ENCODE measurements at regions of chr22 and their contacts with region 1.

Region 1: DNA sequence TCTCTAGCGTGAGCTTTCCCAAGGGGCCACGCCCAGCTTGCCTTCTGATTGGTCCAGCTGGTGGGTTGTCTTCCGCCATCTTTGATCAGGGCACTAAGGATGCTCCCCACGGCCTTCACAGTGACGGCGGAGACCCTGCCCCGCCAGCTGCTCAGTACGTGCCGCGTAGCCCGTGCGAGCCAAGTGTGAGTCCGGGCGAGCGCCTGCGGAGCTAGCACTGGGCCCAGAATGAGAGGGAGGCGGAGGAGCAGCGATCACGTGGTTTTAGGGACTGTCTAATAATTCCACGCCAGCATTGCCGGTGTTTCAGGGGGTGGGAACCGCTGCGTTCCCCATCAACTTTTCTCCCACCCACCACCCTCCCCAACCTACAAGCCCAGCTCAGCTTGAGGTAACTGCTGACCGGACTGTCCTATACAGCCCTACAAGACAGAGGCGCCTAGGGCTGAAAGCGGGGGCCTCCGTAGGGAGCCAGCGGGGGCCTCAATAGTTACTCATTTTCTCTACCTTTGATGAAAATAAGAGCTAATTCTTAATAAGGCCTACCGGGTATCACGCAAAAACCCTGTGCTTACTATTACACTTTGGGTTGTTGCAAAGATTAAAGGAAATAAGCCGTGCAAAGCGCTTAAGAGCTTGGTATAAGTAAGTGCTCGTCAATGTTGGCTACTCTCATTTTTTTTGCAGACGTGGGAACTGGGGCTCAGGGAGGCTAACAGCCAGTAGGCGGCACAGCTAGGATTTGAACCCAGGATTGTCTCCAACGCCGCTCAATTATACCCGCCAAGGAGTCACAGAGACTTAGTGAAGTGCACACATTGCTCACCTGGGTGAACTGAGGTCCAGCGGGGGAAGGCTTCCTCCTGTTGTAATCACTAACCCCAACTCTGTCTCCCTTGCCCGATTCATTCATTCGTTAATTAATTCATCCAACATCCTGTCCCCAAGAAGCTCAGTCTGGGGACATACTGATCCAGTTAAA is 1.3 kb upstream of the MTFP1 start:
- DNase-seq: peak; percentile 97 to 99 (median 99)
- H3K4me3 ChIP-seq: peak overlapping the region; percentile 71 to 79
- H3K4me3 Mint-ChIP-seq: peak overlapping the region; percentile 96 to 99 (median 98)
- H3K27ac ChIP-seq: peak overlapping the region; percentile 89
- H3K27ac Mint-ChIP-seq: peak overlapping the region; percentile 88 to 99 (median 99)
- H3K4me1 ChIP-seq: peaks cover 47% of the 10 kb centered on the region
- H3K4me1 Mint-ChIP-seq: peaks cover 35 to 72% (median 49%) of the 10 kb centered on the region in 4 donors
- H3K27me3 ChIP-seq: no peaks in the 10 kb centered on the region
- H3K27me3 Mint-ChIP-seq: no peaks in the 10 kb centered on the region

Region 2: DNA sequence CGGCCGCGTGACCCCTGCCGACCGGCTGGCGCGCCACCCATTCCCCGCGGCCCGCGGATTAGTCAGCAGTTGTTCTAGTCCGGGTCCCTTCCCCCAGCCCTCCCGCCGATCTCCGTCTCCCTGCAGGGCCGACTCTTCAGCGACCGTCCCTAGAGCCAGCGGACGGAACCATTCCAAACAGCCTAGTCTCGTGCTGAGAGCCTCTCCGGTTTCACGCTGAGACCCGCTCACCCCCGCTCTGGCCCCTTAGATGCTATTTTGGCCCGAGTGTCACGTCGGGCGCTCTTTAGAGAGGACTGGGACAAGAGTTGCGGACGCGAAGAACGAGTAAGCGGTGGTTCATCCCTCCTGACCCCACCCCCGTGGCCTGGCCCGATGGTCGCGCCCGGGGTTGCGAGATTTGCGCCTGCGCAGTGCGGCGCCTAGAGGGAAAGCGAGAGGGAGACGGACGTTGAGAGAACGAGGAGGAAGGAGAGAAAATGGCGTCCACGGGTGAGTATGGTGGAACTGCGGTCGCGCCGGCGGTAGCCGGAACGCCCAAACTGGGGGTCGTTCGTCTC is 1156.3 kb before region 1 on chr22 and contains the starts of genes EWSR1 and RHBDD3:
- CTCF ChIA-PET with region 1: no interaction called
- POLR2A ChIA-PET with region 1: no interaction called
- intact Hi-C with region 1: loop called (anchors 2 kb)
- DNase-seq: peak; percentile 95 to 100 (median 96)
- H3K4me3 ChIP-seq: peak within 1 kb of the TSS; percentile 78 to 79
- H3K4me3 Mint-ChIP-seq: peak within 1 kb of the TSS; percentile 91 to 99 (median 98)
- H3K27ac ChIP-seq: peak within 1 kb of the TSS; percentile 99
- H3K27ac Mint-ChIP-seq: peak within 1 kb of the TSS; percentile 97 to 100 (median 99)
- H3K4me1 ChIP-seq: peaks cover 54% of the 10 kb centered on the region
- H3K4me1 Mint-ChIP-seq: peaks cover 37 to 63% (median 47%) of the 10 kb centered on the region in 4 donors
- H3K27me3 ChIP-seq: no peaks in the 10 kb centered on the region
- H3K27me3 Mint-ChIP-seq: no peaks in the 10 kb centered on the region
- total RNA-seq, gene EWSR1: 247 to 250 TPM
- total RNA-seq, gene RHBDD3: 14.2 to 16.1 TPM

Region 3: GRCh38 chr22:30305519-30305905 is 118.8 kb before region 1 on chr22:
- CTCF ChIA-PET with region 1: interaction called, 3 read pairs
- POLR2A ChIA-PET with region 1: interaction called, 22 read pairs
- intact Hi-C with region 1: no loop called
- DNase-seq: peak; percentile 62 to 72 (median 65)
- H3K4me3 ChIP-seq: peak overlapping the region; percentile 60 to 64
- H3K4me3 Mint-ChIP-seq: peak overlapping the region; percentile 67 to 86 (median 82)
- H3K27ac ChIP-seq: peak overlapping the region; percentile 64
- H3K27ac Mint-ChIP-seq: peak overlapping the region; percentile 81 to 98 (median 95)
- H3K4me1 ChIP-seq: peaks cover 100% of the 10 kb centered on the region
- H3K4me1 Mint-ChIP-seq: peaks cover 74 to 100% (median 91%) of the 10 kb centered on the region in 4 donors
- H3K27me3 ChIP-seq: no peaks in the 10 kb centered on the region
- H3K27me3 Mint-ChIP-seq: no peaks in the 10 kb centered on the region

Region 4: DNA sequence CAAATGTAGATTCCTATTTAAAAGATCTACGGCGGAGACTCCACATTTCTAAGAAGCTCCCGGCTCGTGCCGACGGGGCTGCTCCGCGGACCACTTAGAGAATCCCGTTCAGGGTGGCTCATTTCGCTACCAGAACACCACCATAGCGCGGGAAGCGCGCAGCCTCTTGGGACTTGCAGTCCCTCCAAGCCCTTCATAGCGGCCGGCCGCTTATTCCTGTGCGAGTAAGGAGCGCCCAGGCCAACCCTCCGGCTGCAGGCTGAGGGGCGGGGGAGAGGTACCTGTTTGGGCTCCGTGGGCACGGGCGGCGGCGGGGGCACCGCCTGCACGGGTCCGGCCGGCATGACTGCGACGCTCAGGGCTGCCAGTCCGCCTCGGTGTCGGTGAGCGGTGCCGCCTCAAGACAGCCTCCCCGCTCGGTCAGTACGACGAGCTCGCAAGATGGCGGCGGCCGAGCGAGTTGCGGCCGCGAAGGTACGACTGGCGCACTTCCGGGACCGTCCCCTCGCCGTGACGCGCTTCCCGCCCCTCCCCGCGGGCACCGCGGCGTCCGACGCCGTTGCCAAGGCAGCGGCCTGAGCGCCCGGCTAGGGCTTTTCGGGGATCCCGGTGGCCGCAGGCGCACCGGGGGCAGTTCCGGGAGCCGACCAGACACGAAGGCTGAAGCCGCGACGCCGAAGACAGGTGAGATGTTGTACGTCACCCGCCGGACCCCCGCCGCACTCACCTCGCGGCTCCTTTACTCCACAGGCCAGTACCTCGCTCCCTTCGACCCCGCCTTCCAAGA is 67.6 kb before region 1 on chr22 and contains the starts of genes CCDC157 and SF3A1:
- CTCF ChIA-PET with region 1: interaction called, 3 read pairs
- POLR2A ChIA-PET with region 1: interaction called, 15 read pairs
- intact Hi-C with region 1: loop called (anchors 2 kb)
- DNase-seq: peak; percentile 86 to 90 (median 89)
- H3K4me3 ChIP-seq: peak within 1 kb of the TSS; percentile 82 to 94
- H3K4me3 Mint-ChIP-seq: peak within 1 kb of the TSS; percentile 93 to 98 (median 97)
- H3K27ac ChIP-seq: peak within 1 kb of the TSS; percentile 96
- H3K27ac Mint-ChIP-seq: peak within 1 kb of the TSS; percentile 94 to 99 (median 98)
- H3K4me1 ChIP-seq: peaks cover 47% of the 10 kb centered on the region
- H3K4me1 Mint-ChIP-seq: peaks cover 25 to 60% (median 46%) of the 10 kb centered on the region in 4 donors
- H3K27me3 ChIP-seq: no peaks in the 10 kb centered on the region
- H3K27me3 Mint-ChIP-seq: no peaks in the 10 kb centered on the region
- total RNA-seq, gene CCDC157: 2.1 to 3.0 TPM
- total RNA-seq, gene SF3A1: 279 to 301 TPM

Region 5: DNA sequence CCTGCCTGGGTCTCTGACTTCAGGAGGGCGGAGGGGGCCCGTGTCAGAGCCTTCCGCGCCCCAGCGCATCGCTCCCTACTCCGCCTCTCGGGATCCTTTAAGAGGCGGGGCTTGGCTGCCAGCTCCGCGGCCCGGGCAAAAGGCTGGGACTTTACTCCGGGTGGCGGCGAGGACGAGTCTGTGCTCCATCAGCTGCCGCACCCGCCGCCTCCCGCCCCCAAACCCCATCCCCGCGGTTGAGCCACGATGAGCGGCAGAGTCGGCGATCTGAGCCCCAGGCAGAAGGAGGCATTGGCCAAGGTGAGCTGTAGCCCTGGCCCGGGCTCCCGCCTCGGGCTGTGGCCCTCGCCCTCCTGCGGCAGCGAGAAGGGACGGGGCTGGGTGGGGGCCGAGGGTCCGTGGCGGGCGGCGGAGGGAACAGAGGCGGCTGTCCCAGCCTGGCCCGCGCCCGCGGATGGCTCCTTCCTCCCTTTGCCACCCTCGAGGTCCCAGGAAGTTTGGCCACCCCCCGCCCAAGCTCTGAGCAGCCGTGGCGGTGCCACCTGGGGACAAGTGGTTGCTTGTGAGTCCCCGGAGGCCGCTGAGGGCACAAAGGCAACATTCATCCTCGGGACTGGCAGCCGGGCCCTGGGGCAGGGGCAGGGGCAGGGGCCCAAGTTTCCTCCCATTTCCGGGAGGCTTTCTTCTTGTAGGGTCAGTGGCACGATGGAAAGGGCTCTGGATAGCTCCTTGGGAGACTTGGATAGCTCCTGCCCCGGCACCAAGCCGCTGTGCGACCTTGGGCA is 27.2 kb before region 1 on chr22 and contains the start of gene SEC14L2:
- CTCF ChIA-PET with region 1: interaction called, 194 read pairs
- POLR2A ChIA-PET with region 1: interaction called, 91 read pairs
- intact Hi-C with region 1: loop called (anchors 1 kb)
- DNase-seq: peak; percentile 42 to 60 (median 48)
- H3K4me3 ChIP-seq: peak within 1 kb of the TSS; percentile 18 to 29
- H3K4me3 Mint-ChIP-seq: peak within 1 kb of the TSS; percentile 83 to 95 (median 90)
- H3K27ac ChIP-seq: peak within 1 kb of the TSS; percentile 39
- H3K27ac Mint-ChIP-seq: peak within 1 kb of the TSS in 6 of 7 donors; percentile 57 to 93 (median 88)
- H3K4me1 ChIP-seq: peaks cover 27% of the 10 kb centered on the region
- H3K4me1 Mint-ChIP-seq: peaks cover 16 to 34% (median 27%) of the 10 kb centered on the region in 4 donors
- H3K27me3 ChIP-seq: no peaks in the 10 kb centered on the region
- H3K27me3 Mint-ChIP-seq: peaks cover 0 to 2% of the 10 kb centered on the region in 2 donors
- total RNA-seq, gene SEC14L2: 6.0 to 8.6 TPM

Region 6: DNA sequence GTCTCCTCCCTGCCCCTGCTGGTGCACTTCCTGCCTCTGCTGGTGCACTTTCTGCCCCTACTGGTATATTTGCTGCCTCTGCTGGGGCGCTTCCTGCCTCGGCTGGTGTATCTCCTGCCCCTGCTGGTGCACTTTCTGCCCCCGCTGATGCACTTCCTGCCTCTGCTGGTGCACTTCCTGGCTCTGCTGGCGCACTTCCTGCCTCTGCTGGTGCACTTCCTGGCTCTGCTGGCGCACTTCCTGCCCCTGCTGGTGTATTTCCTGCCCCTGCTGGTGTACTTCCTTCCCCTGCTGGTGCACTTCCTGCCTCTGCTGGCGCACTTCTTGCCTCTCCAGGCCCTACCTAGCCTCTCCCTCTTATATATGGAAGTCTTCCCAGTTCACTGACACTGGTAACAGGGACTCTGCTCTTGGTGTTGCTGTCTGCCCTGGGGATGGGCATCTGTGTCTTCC is 11.4 kb after region 1 on chr22:
- CTCF ChIA-PET with region 1: interaction called, 74 read pairs
- POLR2A ChIA-PET with region 1: interaction called, 126 read pairs
- intact Hi-C with region 1: loop called (anchors 1 kb)
- DNase-seq: peak; percentile 89 to 95 (median 93)
- H3K4me3 ChIP-seq: peak overlapping the region; percentile 38 to 71
- H3K4me3 Mint-ChIP-seq: peak overlapping the region; percentile 46 to 86 (median 80)
- H3K27ac ChIP-seq: peak overlapping the region; percentile 91
- H3K27ac Mint-ChIP-seq: peak overlapping the region; percentile 80 to 100 (median 100)
- H3K4me1 ChIP-seq: peaks cover 19% of the 10 kb centered on the region
- H3K4me1 Mint-ChIP-seq: peaks cover 11 to 29% (median 18%) of the 10 kb centered on the region in 4 donors
- H3K27me3 ChIP-seq: peaks cover 7% of the 10 kb centered on the region
- H3K27me3 Mint-ChIP-seq: peaks cover 15 to 16% of the 10 kb centered on the region in 2 donors

Region 7: DNA sequence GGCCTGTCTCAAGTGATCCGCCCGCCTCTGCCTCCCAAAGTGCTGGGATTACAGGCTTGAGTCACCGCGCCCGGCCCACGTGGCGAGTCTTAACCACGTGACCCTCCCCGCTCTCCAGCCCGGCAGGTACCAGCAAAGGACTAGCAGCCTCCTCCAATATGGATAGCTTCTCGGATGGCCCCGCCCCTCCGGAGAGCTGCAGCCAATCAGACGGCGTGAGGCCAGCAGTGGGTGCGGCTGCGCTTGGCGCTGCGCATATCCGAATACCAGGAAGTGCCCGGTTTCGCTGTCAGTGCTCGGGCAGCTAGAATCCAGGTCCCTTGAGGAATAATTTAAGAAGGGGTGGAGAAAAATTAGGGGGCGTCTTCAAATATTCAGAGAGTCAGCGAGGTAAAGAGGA is 1252.4 kb after region 1 on chr22:
- CTCF ChIA-PET with region 1: no interaction called
- POLR2A ChIA-PET with region 1: no interaction called
- intact Hi-C with region 1: loop called (anchors 2 kb)
- DNase-seq: peak; percentile 89 to 94 (median 89)
- H3K4me3 ChIP-seq: peak overlapping the region; percentile 65 to 80
- H3K4me3 Mint-ChIP-seq: peak overlapping the region; percentile 92 to 100 (median 96)
- H3K27ac ChIP-seq: peak overlapping the region; percentile 76
- H3K27ac Mint-ChIP-seq: peak overlapping the region; percentile 91 to 100 (median 97)
- H3K4me1 ChIP-seq: peaks cover 3% of the 10 kb centered on the region
- H3K4me1 Mint-ChIP-seq: peaks cover 10 to 13% (median 12%) of the 10 kb centered on the region in 4 donors
- H3K27me3 ChIP-seq: no peaks in the 10 kb centered on the region
- H3K27me3 Mint-ChIP-seq: no peaks in the 10 kb centered on the region